Prostate gland (tissue), 2 donors: ENCODE measurements at regions of chr20 and their contacts with region 1.

Region 1: DNA sequence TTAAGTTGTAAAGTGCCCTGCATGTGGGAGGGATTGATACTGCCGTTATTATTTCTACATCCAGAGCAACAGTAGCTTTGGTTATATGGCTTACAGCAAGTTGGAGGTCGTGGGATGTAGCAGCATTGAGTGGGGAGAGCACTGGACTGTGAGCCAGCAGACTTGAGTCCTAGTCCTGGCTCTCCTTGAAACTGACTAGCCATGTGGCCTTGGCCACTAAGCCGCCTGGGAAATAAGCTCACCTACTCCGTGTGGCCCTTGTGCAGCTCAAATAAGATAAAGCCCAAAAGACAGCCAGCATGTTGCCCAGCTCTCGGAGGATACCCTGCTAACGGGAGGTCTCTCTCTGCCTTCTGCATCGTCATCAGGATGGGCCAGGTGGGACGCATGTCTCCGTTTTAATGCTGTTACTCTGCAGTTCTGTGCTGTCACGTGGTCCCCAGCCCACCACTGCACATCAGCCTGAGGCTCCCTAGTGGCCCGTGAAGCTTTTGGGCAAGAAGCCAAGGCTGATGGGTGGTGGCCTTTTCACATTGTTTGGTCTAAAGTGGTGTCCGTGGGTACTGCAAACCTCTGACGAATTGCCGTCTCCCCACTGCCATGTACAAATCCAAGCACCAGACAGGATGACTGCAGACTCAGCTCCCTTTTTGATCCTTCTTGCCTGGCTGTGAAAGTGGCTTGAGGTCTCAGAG is 7.9 kb downstream of the EPB41L1 start:
- DNase-seq: no peak
- H3K4me3 ChIP-seq: no peak overlapping the region
- H3K27ac ChIP-seq: no peak overlapping the region
- H3K4me1 ChIP-seq: no peaks in the 10 kb centered on the region
- H3K27me3 ChIP-seq: no peaks in the 10 kb centered on the region
- CTCF ChIP-seq: no peak
- POLR2A ChIP-seq: no peak

Region 2: DNA sequence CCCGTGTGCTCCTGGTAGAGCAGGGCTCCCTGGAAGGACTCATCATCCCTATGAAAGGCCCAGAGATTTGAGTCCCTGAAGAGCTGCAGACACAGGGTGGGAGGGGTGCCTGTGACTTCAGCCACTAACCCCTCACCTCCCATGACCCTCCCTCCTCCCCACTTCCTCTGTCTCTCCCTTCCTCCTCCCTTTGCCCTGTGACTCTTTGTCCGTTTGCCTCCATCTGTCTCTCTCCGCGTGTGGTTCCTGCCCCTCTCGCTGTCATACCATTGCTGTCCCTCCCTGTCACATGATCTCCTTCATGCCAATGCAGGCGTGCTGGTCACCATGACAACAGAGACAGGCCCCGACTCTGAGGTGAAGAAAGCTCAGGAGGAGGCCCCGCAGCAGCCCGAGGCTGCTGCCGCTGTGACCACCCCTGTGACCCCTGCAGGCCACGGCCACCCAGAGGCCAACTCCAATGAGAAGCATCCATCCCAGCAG is 11.1 kb after region 1 on chr20:
- intact Hi-C with region 1: loop called (anchors 1 kb)
- DNase-seq: no peak
- H3K4me3 ChIP-seq: no peak overlapping the region
- H3K27ac ChIP-seq: no peak overlapping the region
- H3K4me1 ChIP-seq: no peaks in the 10 kb centered on the region
- H3K27me3 ChIP-seq: no peaks in the 10 kb centered on the region
- CTCF ChIP-seq: no peak
- POLR2A ChIP-seq: no peak